ENCODE measurements at regions of chr15 and their contacts with region 1.

Region 1: DNA sequence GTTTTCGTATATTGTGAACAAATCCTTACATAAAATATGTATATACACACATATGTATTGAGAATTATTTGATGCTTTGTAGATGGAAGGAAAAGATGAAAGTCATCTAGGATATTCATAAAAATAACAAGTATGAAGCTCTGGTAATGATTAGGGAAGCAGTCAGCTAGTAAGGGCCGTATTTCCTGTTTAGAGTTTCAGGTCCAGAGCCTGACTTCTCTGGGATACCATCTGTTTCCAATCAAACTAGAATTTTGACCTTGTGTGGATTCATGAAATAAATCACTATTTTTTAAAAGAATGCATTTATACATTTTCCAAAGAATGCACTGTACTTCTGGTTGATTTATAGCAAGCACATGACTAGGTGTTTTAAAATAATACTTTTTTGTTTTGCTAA is 156.1 kb upstream of the CGNL1 start:
- DNase-seq: no peak
- H3K4me3 ChIP-seq: peak overlapping the region; percentile 48
- CTCF ChIP-seq: no peak

Region 2: GRCh38 chr15:57288926-57289580 is 68.8 kb after region 1 on chr15:
- in situ Hi-C with region 1: loop called (anchors 5 kb)
- DNase-seq: no peak
- H3K4me3 ChIP-seq: no peak overlapping the region
- CTCF ChIP-seq: no peak

Measured in astrocyte of the cerebellum (primary cell).